Sciatic nerve (tissue), 2 donors: ENCODE measurements at regions of chr10 and their contacts with region 1.

Region 1: GRCh38 chr10:71191531-71192076 is 20.8 kb upstream of the UNC5B start:
- DNase-seq: no peak
- ATAC-seq: no peak

Region 2: DNA sequence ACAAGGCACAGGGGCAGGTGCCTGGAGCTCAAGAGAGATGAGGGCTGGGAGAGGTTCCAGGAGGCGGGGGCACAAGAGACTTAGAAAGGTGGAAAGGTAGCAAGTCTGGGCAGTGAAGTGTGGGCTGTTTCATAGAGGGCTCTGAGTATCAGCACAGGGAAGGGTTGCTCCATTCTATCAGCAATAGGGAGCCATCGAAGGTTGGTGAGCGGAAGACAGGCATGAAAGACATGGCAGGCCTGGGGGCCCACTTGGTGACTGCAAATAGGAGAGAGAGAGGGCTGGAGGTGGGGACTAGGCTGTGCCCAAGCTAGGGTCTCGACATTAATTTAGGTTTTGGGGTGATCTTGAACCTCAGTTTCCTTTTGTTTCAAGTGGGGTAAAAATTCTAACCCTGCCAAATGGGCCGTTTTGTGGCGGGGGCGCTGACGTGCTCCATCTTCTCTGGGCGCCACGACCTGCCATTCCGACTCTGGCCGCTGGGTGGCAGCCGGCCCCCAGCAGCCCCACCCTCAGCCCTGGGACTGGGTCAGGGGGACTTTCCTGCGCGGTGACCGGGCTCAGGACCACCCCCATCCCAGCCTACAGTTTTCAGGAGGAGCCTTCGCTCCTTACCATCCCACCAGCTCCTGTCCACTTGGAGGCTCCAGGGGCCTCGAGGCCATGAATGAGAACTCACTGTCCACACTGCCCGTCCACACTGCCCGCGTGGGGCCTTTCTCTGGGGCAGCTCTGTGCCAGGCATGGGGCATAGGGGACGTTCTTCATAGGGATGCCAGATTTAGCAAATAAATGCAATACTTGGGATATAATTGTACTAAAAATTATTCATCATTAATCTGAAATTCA is 266.0 kb before region 1 on chr10:
- intact Hi-C with region 1: loop called (anchors 10 kb)
- DNase-seq: no peak
- ATAC-seq: peak; percentile 68